ENCODE measurements at regions of chr17 and their contacts with region 1.

Region 1: GRCh38 chr17:42067351-42068091 is 17.1 kb upstream of the C17orf113 start:
- DNase-seq: peak; percentile 85
- H3K4me3 ChIP-seq: peak overlapping the region in 1 of 2 experiments; percentile 4; a peak in 1 of 4 replicates
- H3K27ac ChIP-seq: no peak overlapping the region
- H3K4me1 ChIP-seq: peaks cover 0 to 12% of the 10 kb centered on the region in 2 experiments; a peak in 1 of 4 replicates
- H3K27me3 ChIP-seq: no peaks in the 10 kb centered on the region
- CTCF ChIP-seq: peak; percentile 88
- EP300 ChIP-seq: no peak
- RAD21 ChIP-seq: peak; percentile 63

Region 2: DNA sequence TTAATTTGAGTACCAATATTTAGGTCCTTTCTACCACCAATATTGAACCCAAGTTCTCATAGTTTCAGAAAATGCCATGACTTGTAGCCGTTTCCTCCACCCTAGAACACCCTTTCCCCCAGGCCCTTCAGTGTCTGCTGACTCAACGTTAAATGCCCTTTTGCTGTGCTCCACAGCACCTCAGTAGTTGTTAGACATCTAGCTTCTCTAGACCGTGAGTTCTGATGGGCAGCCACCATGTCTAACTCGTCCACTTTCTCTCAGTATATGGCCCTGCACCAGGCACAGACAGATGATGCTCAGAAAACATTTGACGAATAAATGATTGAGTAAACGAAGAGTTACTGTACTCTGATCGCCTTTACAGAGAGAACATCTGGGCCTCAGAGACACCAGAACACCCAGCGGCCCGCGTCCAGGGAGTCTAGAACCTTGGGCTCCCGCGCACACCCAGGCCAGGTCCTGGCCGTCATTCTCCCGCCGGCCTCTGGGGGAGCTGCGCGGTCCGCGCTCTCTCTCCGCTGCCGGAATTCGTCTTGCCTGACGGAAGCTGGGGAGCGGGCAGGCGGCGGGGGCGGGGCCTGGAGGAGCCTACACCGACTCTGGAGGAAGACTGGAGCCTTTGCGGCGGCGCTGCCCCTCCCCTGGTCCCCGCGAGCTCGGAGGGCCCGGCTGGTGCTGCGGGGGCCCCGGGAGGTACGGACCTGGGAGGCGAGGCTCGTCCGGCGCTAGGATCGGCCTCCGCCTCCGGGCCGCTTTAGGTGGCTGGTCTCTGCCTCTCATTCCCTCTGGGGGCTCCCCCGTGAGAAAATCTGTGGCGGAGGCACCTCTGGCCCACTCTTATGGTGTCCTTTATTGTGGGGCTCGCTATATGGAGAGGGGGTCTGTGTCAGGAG is 47.8 kb before region 1 on chr17 and contains the start of gene NKIRAS2:
- CTCF ChIA-PET with region 1: interaction called, 22 read pairs
- POLR2A ChIA-PET with region 1: no interaction called
- DNase-seq: peak; percentile 96
- H3K4me3 ChIP-seq: peak within 1 kb of the TSS; percentile 91 to 92
- H3K27ac ChIP-seq: peak within 1 kb of the TSS; percentile 73 to 81; a peak in 3 of 4 replicates
- H3K4me1 ChIP-seq: peaks cover 9 to 25% of the 10 kb centered on the region in 2 experiments; a peak in 3 of 4 replicates
- H3K27me3 ChIP-seq: no peaks in the 10 kb centered on the region
- CTCF ChIP-seq: peak; percentile 82
- EP300 ChIP-seq: peak in 1 of 2 experiments; percentile 19; a peak in 1 of 4 replicates
- RAD21 ChIP-seq: no peak
- polyA plus RNA-seq, gene NKIRAS2: 89.8 and 91.8 TPM in 2 replicates

Region 3: DNA sequence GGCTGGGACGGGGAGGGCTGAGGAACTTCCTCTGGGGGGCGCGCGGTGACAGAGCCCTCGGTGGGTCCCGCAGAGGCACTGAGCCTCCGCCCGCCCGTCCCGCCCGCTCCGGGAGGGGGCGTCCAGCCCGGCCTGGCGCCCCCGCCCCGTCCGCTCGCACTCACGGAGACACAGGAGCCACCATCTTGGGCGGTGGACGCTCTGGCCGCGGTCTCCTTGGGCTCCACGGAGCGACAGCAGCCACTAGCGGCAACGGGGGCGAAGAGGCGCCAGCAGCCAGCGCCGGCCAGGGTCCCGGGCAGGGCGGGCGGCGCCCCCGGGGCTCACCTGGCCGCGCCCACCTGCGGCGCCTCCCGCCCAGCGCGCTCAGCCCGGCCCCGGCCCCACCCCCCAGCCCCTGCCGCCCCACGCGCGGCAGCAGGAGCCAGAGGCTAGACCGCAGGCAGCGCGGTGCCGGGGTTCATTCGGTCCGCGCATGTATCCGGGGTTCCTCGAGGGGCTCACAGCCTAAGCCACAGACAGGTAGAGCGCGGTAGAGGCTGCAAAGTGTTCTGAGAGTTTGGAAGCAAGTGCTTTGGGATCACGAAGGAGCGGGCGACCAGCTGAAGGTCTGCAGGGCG is 17.0 kb before region 1 on chr17 and contains the start of gene C17orf113:
- CTCF ChIA-PET with region 1: interaction called, 26 read pairs
- POLR2A ChIA-PET with region 1: no interaction called
- DNase-seq: peak; percentile 94
- H3K4me3 ChIP-seq: peak within 1 kb of the TSS; percentile 57 to 60
- H3K27ac ChIP-seq: no peak within 1 kb of the TSS
- H3K4me1 ChIP-seq: peaks cover 0 to 8% of the 10 kb centered on the region in 2 experiments; a peak in 1 of 4 replicates
- H3K27me3 ChIP-seq: peaks cover 15% of the 10 kb centered on the region
- CTCF ChIP-seq: peak; percentile 27; the same call in 1 of the 2 replicates
- EP300 ChIP-seq: no peak
- RAD21 ChIP-seq: peak; percentile 33; the same call in 1 of the 2 replicates
- polyA plus RNA-seq, gene C17orf113: 0.44 and 0.52 TPM in 2 replicates

Region 4: DNA sequence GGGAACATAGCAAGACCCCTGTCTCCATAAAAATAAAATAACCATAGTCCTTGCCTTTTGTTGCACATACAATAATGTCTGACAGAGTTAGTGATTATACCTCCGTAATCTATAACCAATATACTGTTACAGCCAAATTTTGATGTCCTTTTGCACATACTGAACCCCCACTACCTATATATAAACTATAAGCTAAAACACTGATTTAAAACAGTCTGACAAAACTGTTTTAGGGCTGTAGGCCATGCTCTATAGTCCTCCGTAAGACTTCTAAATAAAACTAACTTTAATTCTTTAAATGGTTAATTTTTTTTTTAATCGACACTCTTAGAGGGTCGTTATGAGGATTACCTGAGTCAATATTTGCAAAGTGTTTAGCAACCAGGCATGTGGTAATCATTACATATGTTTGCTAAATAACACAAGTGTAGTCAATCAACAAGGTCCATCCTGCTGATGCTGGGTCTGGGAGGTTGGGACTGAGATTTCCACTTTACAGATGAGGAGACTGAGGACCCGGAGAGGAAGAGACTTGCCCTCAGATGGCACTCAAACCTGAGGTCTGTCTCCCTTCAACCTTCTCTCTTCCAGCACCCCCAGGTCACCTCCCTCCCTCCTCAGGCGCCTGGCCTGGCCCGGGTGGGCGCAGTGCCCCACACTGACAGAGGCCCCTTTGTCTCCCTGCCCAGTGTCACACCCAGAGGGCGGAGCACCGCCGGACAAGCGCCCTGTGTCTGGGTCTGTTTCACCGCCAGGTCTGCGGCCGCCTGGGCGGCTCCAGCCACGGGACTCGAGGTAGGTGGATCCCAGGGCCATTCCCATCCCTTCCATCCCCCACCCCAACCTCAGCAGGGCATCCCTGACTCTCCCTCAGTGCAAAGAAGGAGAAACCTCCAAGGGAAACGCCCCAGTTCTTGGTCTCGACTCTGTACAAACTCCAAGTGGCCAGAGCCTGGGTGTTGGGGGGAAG is 20.5 kb after region 1 on chr17:
- CTCF ChIA-PET with region 1: interaction called, 26 read pairs
- POLR2A ChIA-PET with region 1: no interaction called
- DNase-seq: no peak
- H3K4me3 ChIP-seq: no peak overlapping the region
- H3K27ac ChIP-seq: no peak overlapping the region
- H3K4me1 ChIP-seq: no peaks in the 10 kb centered on the region
- H3K27me3 ChIP-seq: peaks cover 7% of the 10 kb centered on the region; the same call in 1 of the 2 replicates
- CTCF ChIP-seq: no peak
- EP300 ChIP-seq: no peak
- RAD21 ChIP-seq: no peak

Region 5: GRCh38 chr17:42120770-42121769 is 53.5 kb after region 1 on chr17 and contains the start of gene KAT2A:
- CTCF ChIA-PET with region 1: interaction called, 62 read pairs
- POLR2A ChIA-PET with region 1: interaction called, 3 read pairs
- DNase-seq: peak; percentile 97
- H3K4me3 ChIP-seq: peak within 1 kb of the TSS; percentile 49 to 71
- H3K27ac ChIP-seq: peak within 1 kb of the TSS in 1 of 2 experiments; percentile 64; a peak in 2 of 4 replicates
- H3K4me1 ChIP-seq: peaks cover 0 to 11% of the 10 kb centered on the region in 2 experiments; a peak in 1 of 4 replicates
- H3K27me3 ChIP-seq: no peaks in the 10 kb centered on the region
- CTCF ChIP-seq: no peak
- EP300 ChIP-seq: no peak
- RAD21 ChIP-seq: no peak
- polyA plus RNA-seq, gene KAT2A: 45.1 and 58.6 TPM in 2 replicates